ENCODE measurements at regions of chr3 and their contacts with region 1.

Region 1: GRCh38 chr3:158672293-158673176 is at the start of gene LXN:
- DNase-seq: peak; percentile 94
- H3K4me3 ChIP-seq: peak within 1 kb of the TSS; percentile 56 to 68 (median 62)
- H3K27ac ChIP-seq: peak within 1 kb of the TSS; percentile 77 to 85 (median 81)
- H3K4me1 ChIP-seq: peaks cover 3 to 24% (median 17%) of the 10 kb centered on the region in 4 donors
- H3K27me3 ChIP-seq: no peaks in the 10 kb centered on the region
- CTCF ChIP-seq: peak; percentile 46 to 72 (median 54)
- EP300 ChIP-seq: no peak
- POLR2A ChIP-seq: no peak
- total RNA-seq, gene LXN: 7.2 to 9.2 (median 7.9) TPM

Region 2: DNA sequence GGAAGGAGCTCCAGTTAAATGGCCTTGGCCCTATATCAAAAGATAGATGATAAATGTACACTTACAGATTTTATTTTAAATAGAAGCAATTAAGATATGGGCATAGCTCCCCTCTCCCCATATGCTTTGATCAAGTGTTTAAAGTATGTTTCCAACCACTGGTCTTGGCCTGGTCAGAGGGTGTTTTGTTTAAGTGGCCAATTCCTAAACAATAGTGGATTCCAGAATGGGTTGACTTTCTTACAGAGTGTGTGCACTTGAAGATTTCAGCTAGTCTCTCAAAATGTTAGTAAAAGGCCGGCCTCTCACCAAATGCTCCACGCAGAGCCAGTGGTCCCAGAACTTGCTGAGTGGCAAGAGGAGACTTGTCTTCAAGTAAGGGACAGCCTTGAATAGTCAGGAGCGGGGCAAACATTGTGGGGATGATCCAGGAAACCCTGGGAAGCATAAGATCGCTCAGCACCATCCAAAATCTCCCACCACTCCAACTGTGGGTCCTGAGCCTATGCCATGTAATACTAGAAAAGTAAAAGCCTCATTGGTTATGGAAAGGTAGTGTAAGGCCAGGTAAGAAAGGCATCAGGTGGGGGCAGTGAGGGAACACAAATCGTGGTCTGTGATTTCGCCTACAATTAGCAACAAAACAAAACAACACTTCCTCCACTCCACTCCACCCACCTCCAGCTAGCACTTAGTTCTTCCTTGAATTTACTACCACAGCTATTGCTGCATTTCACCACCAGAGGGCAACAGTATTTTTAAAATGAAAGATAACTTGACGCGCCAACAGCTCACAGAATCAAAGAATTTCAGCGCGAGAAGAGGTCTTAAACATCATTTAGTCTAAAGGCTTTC is 54.9 kb after region 1 on chr3:
- intact Hi-C with region 1: loop called (anchors 10 kb)
- DNase-seq: no peak
- H3K4me3 ChIP-seq: peak overlapping the region in 3 of 4 donors; percentile 20 to 36 (median 31)
- H3K27ac ChIP-seq: peak overlapping the region; percentile 44 to 65 (median 58)
- H3K4me1 ChIP-seq: peaks cover 28 to 86% (median 60%) of the 10 kb centered on the region in 4 donors
- H3K27me3 ChIP-seq: peaks cover 0 to 3% (median 0%) of the 10 kb centered on the region in 4 donors
- CTCF ChIP-seq: peak; percentile 89 to 95 (median 89)
- EP300 ChIP-seq: no peak
- POLR2A ChIP-seq: no peak